ENCODE measurements at regions of chr3 and their contacts with region 1.

Region 1: DNA sequence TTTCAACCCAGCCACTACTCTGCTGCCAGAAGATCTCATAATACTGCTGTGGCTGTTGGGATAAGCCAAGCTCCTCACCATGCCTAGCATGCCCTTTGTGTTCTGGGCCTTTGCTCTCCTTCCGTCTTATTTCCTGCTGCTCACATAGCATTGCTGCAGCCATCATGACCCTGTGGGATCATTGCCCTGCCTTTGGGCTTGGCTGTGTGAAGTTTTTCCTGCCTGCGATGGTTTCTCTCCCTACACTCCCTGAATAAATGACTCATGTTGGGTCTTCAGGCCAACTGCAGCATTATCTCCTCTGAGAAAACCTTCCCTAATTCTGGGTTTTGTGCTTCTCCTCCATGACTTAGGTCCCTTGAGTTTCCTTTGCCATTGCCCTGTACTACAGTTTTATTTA is 20.8 kb upstream of the TRA2B start:
- DNase-seq: no peak
- ATAC-seq: no peak
- H3K4me3 Mint-ChIP-seq: no peak overlapping the region
- H3K27ac Mint-ChIP-seq: no peak overlapping the region
- H3K4me1 Mint-ChIP-seq: no peaks in the 10 kb centered on the region
- H3K27me3 Mint-ChIP-seq: peaks cover 23% of the 10 kb centered on the region
- CTCF ChIP-seq: no peak

Region 2: DNA sequence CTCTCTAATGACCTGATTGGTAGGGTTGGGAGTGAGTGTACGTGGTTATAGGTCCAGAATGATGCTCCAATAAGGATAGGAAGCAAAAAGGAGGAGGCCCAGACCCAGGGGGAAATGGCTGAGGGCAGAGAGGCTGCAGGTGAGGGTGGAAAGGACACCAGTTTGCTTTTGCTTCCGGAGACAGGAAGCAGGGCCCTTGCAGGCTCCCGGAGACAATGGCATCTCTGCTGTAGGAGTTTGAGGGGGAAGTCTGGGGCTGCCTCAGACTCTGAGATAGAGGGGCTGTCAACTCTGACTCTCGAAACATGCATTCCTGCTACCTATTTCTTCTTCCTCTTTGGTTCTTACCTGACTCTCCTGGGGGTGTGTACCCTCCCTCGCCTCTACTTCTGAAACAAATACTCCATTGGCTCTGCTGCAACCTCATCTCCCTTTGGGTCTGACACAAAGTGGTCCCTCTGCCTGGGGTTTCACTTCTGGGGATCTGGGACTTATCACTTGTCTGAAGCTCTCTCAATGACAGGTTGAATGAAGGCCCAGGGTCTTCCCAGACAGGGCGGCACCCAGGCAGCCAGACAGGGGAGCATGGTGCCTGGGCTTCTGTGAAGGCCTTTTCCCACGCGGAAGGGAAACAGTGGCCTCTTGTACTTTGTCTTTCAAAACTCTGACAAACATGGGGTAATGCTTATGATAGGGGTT is 1517.3 kb before region 1 on chr3:
- CTCF ChIA-PET with region 1: no interaction called
- POLR2A ChIA-PET with region 1: no interaction called
- intact Hi-C with region 1: no loop called
- DNase-seq: no peak
- ATAC-seq: no peak
- H3K4me3 Mint-ChIP-seq: no peak overlapping the region
- H3K27ac Mint-ChIP-seq: no peak overlapping the region
- H3K4me1 Mint-ChIP-seq: no peaks in the 10 kb centered on the region
- H3K27me3 Mint-ChIP-seq: peaks cover 6% of the 10 kb centered on the region
- CTCF ChIP-seq: no peak

Region 3: GRCh38 chr3:186352369-186352768 is 393.7 kb after region 1 on chr3:
- CTCF ChIA-PET with region 1: no interaction called
- POLR2A ChIA-PET with region 1: interaction called, 10 read pairs
- intact Hi-C with region 1: no loop called
- DNase-seq: no peak
- ATAC-seq: no peak
- H3K4me3 Mint-ChIP-seq: no peak overlapping the region
- H3K27ac Mint-ChIP-seq: no peak overlapping the region
- H3K4me1 Mint-ChIP-seq: no peaks in the 10 kb centered on the region
- H3K27me3 Mint-ChIP-seq: no peaks in the 10 kb centered on the region
- CTCF ChIP-seq: no peak

Measured in activated B cell treated with CpG ODN at 0.5 μM for 24 hours (primary cell).